ENCODE measurements at regions of chr2 and their contacts with region 1.

Region 1: DNA sequence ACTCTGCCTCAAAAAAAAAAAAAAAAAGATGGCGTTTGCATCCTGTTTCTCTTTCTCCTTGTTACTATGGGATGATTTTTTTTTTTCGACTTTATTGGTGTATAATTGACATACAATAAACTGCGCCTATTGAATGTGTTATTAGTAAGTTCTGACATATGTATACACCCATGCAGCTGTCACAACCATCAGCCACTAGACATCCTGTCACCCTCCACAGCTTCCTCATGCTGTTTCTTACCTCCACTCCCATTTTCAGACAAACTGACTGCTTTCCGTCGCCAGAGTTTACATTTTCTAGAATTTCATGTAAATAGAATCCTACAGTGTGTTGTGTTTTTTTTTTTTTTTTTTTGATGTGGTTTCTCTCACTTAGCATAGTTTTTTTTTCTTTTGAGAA is 27.9 kb downstream of the RRM2 start:
- DNase-seq: no peak
- H3K4me3 ChIP-seq: no peak overlapping the region
- H3K27ac ChIP-seq: no peak overlapping the region
- H3K4me1 ChIP-seq: no peaks in the 10 kb centered on the region
- H3K27me3 ChIP-seq: no peaks in the 10 kb centered on the region
- CTCF ChIP-seq: no peak

Region 2: GRCh38 chr2:10162586-10163497 is 12.4 kb after region 1 on chr2:
- CTCF ChIA-PET with region 1: interaction called, 16 read pairs
- POLR2A ChIA-PET with region 1: no interaction called
- intact Hi-C with region 1: no loop called
- DNase-seq: no peak
- H3K4me3 ChIP-seq: no peak overlapping the region
- H3K27ac ChIP-seq: no peak overlapping the region
- H3K4me1 ChIP-seq: peaks cover 15% of the 10 kb centered on the region
- H3K27me3 ChIP-seq: no peaks in the 10 kb centered on the region
- CTCF ChIP-seq: 0 out of 2 replicates have a peak, but pooled peaks have one; percentile 13

Region 3: DNA sequence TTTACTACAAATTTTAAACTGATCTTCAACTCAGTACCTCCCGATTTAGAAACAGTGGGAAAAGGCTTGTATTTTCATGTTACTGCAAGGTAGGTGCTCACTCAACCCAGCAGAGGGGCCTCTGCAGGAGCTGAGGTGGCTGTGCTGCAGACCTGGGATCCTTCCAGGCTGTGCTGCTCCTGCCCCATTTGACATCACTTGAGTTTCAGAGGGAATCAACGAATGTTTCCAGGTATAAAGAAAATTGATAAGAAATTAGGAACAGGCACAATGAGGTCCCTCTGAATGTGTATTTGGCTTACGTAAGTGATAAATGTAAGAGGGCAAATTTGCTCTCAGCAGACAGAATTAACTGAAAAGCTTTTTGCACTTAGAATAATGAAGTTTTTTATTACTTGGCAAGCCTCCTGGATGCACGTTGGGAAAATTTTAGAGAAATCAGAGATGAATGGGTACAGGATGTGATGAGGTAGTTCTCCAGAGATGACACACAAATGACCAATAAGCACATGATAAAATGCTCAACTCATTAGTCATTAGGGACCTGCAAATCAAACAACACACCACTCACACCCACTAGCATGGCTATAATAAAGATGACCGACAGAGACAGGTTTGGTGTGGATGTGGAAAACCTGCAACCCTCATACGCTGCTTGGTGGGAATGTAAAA is 425.3 kb after region 1 on chr2:
- CTCF ChIA-PET with region 1: no interaction called
- POLR2A ChIA-PET with region 1: no interaction called
- intact Hi-C with region 1: no loop called
- DNase-seq: no peak
- H3K4me3 ChIP-seq: no peak overlapping the region
- H3K27ac ChIP-seq: no peak overlapping the region
- H3K4me1 ChIP-seq: no peaks in the 10 kb centered on the region
- H3K27me3 ChIP-seq: no peaks in the 10 kb centered on the region
- CTCF ChIP-seq: no peak

Measured in A673 (cell line).